Panc1 (cell line): ENCODE measurements at regions of chr3 and their contacts with region 1.

Region 1: GRCh38 chr3:70064194-70064779 is 64.8 kb downstream of the SAMMSON start:
- DNase-seq: peak; percentile 28
- ATAC-seq: no peak
- H3K4me3 ChIP-seq: no peak overlapping the region
- H3K27ac ChIP-seq: no peak overlapping the region
- H3K4me1 ChIP-seq: no peaks in the 10 kb centered on the region
- H3K27me3 ChIP-seq: no peaks in the 10 kb centered on the region
- CTCF ChIP-seq: peak; percentile 61

Region 2: GRCh38 chr3:69612791-69613190 is 451.5 kb before region 1 on chr3:
- CTCF ChIA-PET with region 1: no interaction called
- POLR2A ChIA-PET with region 1: no interaction called
- in situ Hi-C with region 1: no loop called
- intact Hi-C with region 1: no loop called
- DNase-seq: no peak
- ATAC-seq: no peak
- H3K4me3 ChIP-seq: no peak overlapping the region
- H3K27ac ChIP-seq: no peak overlapping the region
- H3K4me1 ChIP-seq: no peaks in the 10 kb centered on the region
- H3K27me3 ChIP-seq: no peaks in the 10 kb centered on the region
- CTCF ChIP-seq: no peak

Region 3: GRCh38 chr3:70078778-70079177 is 14.5 kb after region 1 on chr3:
- CTCF ChIA-PET with region 1: no interaction called
- POLR2A ChIA-PET with region 1: no interaction called
- in situ Hi-C with region 1: no loop called
- intact Hi-C with region 1: no loop called
- DNase-seq: no peak
- ATAC-seq: no peak
- H3K4me3 ChIP-seq: no peak overlapping the region
- H3K27ac ChIP-seq: no peak overlapping the region
- H3K4me1 ChIP-seq: no peaks in the 10 kb centered on the region
- H3K27me3 ChIP-seq: no peaks in the 10 kb centered on the region
- CTCF ChIP-seq: no peak

Region 4: DNA sequence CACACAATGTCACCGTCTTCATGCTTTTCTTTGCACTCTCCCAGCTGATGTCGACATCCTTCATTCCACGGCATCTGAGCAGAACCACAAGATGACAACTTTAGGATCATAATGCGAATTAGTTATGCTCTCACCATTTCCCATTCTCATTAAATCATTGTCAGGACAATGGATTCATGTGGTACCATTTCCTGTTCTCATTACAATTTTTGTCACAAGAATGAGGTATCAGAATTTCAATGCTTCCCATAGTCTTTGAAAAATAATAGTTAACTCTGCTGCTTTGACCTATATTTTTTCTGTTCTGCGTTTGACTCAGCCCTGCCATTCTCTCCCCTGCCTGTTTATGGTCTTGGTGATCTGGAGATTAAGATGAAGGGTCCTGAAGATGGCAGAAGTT is 423.8 kb after region 1 on chr3:
- CTCF ChIA-PET with region 1: no interaction called
- POLR2A ChIA-PET with region 1: no interaction called
- in situ Hi-C with region 1: no loop called
- intact Hi-C with region 1: no loop called
- DNase-seq: no peak
- ATAC-seq: no peak
- H3K4me3 ChIP-seq: no peak overlapping the region
- H3K27ac ChIP-seq: no peak overlapping the region
- H3K4me1 ChIP-seq: no peaks in the 10 kb centered on the region
- H3K27me3 ChIP-seq: no peaks in the 10 kb centered on the region
- CTCF ChIP-seq: no peak

Region 5: GRCh38 chr3:71652781-71653413 is 1588.6 kb after region 1 on chr3:
- CTCF ChIA-PET with region 1: no interaction called
- POLR2A ChIA-PET with region 1: no interaction called
- in situ Hi-C with region 1: no loop called
- intact Hi-C with region 1: loop called (anchors 5 kb)
- DNase-seq: peak; percentile 12
- ATAC-seq: peak; percentile 56; the same call in 1 of the 2 replicates
- H3K4me3 ChIP-seq: no peak overlapping the region
- H3K27ac ChIP-seq: no peak overlapping the region
- H3K4me1 ChIP-seq: no peaks in the 10 kb centered on the region
- H3K27me3 ChIP-seq: no peaks in the 10 kb centered on the region
- CTCF ChIP-seq: peak; percentile 42